Gastrocnemius medialis (tissue), 4 donors: ENCODE measurements at regions of chr7 and their contacts with region 1.

Region 1: GRCh38 chr7:50467817-50468610 is 17.9 kb upstream of the FIGNL1 start:
- DNase-seq: peak; percentile 72 to 82
- ATAC-seq: peak; percentile 87
- H3K4me3 ChIP-seq: peak overlapping the region; percentile 21 to 57 (median 35)
- H3K27ac ChIP-seq: peak overlapping the region; percentile 71 to 81 (median 74)
- H3K4me1 ChIP-seq: peaks cover 5 to 8% of the 10 kb centered on the region in 2 donors
- H3K27me3 ChIP-seq: no peaks in the 10 kb centered on the region
- CTCF ChIP-seq: peak; percentile 93 to 95 (median 94)
- POLR2A ChIP-seq: no peak

Region 2: GRCh38 chr7:50166997-50167965 is 300.7 kb before region 1 on chr7:
- in situ Hi-C with region 1: no loop called
- intact Hi-C with region 1: no loop called
- DNase-seq: no peak
- ATAC-seq: no peak
- H3K4me3 ChIP-seq: no peak overlapping the region
- H3K27ac ChIP-seq: no peak overlapping the region
- H3K4me1 ChIP-seq: no peaks in the 10 kb centered on the region
- H3K27me3 ChIP-seq: no peaks in the 10 kb centered on the region
- CTCF ChIP-seq: no peak
- POLR2A ChIP-seq: no peak

Region 3: GRCh38 chr7:50595491-50596102 is 127.6 kb after region 1 on chr7:
- in situ Hi-C with region 1: loop called in 3 of 4 experiments (anchors 10 kb)
- intact Hi-C with region 1: loop called (anchors 5 kb)
- DNase-seq: peak in 1 of 2 donors; percentile 65
- ATAC-seq: peak; percentile 46 to 89
- H3K4me3 ChIP-seq: no peak overlapping the region
- H3K27ac ChIP-seq: peak overlapping the region in 3 of 4 donors; percentile 5 to 48 (median 31)
- H3K4me1 ChIP-seq: peaks cover 17 to 25% of the 10 kb centered on the region in 2 donors
- H3K27me3 ChIP-seq: no peaks in the 10 kb centered on the region
- CTCF ChIP-seq: peak; percentile 44 to 64 (median 49)
- POLR2A ChIP-seq: no peak

Region 4: DNA sequence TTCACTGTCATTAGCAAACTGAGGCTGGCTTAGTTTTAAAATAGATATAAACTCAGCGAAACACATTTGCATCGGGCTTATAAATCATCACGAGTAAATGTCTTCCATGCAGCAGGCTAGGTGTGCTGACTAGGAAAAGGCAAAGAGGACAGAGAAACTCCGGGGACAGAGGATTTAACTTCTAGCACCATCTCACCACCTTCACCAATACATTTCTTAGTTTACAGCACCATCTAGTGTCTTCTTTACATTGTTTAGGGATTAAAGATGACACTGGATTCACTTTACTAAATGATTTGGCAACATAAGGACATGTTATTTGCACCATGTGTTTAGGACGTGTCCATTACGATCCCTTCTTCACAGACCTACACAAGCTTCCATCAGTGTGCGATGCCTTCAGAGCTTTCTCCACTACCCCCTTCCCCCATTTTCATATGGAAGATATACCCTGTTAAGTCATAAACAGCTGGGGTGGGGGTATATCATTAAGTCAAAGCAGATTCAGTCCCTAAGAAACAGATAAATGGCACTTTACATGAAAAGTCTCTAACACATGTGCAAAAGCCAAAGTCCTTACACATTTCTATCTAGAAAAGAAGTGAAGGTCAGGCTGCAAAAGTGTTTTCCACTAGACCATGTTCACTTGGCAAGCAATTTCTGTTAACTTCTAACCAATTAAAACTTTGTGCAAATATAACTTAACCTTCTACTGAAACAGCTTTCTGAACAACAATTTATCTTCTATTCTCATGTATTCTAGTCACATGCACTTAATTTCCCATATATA is 211.4 kb after region 1 on chr7:
- in situ Hi-C with region 1: loop called (anchors 5 to 25 kb)
- intact Hi-C with region 1: loop called (anchors 1 kb)
- DNase-seq: no peak
- ATAC-seq: peak; percentile 85 to 88
- H3K4me3 ChIP-seq: no peak overlapping the region
- H3K27ac ChIP-seq: peak overlapping the region; percentile 73 to 97 (median 84)
- H3K4me1 ChIP-seq: peaks cover 73 to 79% of the 10 kb centered on the region in 2 donors
- H3K27me3 ChIP-seq: no peaks in the 10 kb centered on the region
- CTCF ChIP-seq: peak; percentile 41 to 68 (median 48)
- POLR2A ChIP-seq: peak; percentile 16 to 44

Region 5: DNA sequence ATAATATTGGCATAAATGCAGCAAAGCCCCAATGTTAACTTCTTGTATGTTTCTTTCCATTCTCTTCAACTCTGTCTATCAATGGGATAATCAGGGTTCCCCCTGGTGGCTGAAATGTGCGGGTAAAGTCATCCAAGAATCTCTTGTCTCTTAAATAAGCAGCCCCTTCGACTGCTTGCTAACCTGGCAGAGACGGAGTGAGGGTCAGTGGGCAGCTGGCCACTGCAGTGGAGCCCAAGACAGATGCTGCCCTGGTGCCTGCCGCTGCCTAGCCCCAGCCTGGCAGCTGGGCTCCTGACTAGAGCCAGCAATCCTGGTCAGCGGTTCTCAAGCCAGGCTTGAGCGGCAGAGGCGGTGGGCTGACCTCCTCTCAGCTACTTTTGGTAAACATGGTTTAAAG is 599.7 kb after region 1 on chr7:
- in situ Hi-C with region 1: loop called in 2 of 4 experiments (anchors 25 kb)
- intact Hi-C with region 1: loop called (anchors 10 kb)
- DNase-seq: peak in 1 of 2 donors; percentile 36
- ATAC-seq: peak; percentile 57 to 58
- H3K4me3 ChIP-seq: no peak overlapping the region
- H3K27ac ChIP-seq: no peak overlapping the region
- H3K4me1 ChIP-seq: peaks cover 6 to 8% of the 10 kb centered on the region in 2 donors
- H3K27me3 ChIP-seq: no peaks in the 10 kb centered on the region
- CTCF ChIP-seq: peak; percentile 58 to 77 (median 72)
- POLR2A ChIP-seq: no peak

Region 6: DNA sequence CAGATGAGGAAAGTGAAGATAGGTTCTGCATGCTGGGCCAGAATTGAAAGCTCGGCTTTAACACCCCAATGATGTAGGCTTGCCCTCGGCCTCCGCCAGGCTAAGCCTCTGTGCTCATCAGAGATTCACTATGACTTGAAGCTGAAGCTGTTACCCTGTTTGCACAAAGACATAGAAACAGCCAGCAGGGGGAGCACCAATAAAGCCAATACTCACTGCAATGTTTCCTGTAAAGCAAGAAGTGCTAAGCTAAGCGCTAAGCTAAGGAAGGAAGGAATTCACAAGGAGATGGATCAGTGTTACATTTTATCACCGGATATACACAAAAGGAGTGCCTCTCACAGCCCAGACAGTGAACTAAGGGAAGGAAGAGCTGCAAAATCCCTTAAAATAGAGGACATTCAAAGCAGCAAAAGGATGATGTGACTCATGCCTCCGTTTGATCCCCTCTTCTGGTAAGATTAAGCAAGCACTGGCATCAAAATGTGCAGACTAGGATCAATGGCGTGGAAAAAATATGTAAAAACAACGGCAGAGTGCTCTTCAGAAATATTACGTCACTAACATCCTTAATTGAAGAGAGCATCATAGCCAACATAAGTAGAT is 694.8 kb after region 1 on chr7:
- in situ Hi-C with region 1: loop called in 3 of 4 experiments (anchors 10 to 25 kb)
- intact Hi-C with region 1: loop called (anchors 10 kb)
- DNase-seq: peak; percentile 49 to 71
- ATAC-seq: peak; percentile 88 to 94
- H3K4me3 ChIP-seq: no peak overlapping the region
- H3K27ac ChIP-seq: no peak overlapping the region
- H3K4me1 ChIP-seq: peaks cover 0 to 3% of the 10 kb centered on the region in 2 donors
- H3K27me3 ChIP-seq: no peaks in the 10 kb centered on the region
- CTCF ChIP-seq: peak; percentile 56 to 86 (median 79)
- POLR2A ChIP-seq: no peak